CD14-positive monocyte (primary cell): ENCODE measurements at regions of chr17 and their contacts with region 1.

Region 1: DNA sequence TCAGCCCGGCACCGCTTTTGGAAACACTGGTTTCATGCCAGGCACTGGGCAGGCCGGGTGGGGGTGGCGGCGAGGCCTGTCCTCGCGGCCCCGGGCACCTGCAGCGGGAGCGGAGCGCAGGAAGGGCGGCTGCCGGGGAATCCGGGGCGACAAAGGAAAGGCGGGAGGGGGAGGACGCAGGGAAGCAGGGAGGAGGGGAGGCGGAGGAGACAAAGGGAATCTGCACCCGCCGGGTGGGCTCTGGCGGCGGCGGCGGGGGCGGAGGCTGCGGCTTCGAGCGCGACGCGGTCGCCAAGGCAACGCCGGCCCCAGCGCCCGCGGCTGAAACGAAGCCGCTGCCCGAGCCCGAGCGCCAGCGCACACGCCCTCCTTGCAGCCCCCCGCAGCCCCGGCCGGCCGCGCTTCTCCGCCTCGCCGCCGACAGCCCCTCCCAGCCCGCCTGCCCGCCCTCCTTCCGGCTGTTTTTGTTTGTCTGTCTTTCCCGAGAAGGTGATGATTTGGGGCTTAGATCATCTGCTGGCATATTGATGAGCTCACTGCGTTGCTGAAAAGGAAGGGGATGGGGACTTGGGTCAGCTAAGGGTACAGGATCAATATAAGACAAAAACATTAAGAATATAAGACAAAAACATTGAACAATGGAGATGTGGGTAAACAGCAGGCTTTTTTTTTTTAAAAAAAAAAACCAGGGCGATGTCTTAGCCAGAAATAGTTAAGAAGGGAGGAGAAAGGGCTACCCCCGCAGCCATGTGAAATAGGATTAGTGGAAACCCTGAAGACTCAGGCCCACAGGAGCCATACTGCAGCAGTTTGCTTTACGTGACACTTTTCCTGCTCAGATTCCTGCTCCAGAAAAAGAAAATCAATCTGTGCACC is 32.7 kb downstream of the CDK5R1 start:
- DNase-seq: no peak
- H3K4me3 ChIP-seq: peak overlapping the region; percentile 13 to 68 (median 32)
- H3K4me3 Mint-ChIP-seq: peak overlapping the region; percentile 61 to 93
- H3K27ac ChIP-seq: no peak overlapping the region
- H3K27ac Mint-ChIP-seq: no peak overlapping the region
- H3K4me1 ChIP-seq: peaks cover 15 to 19% of the 10 kb centered on the region in 2 donors
- H3K4me1 Mint-ChIP-seq: peaks cover 20% of the 10 kb centered on the region
- H3K27me3 ChIP-seq: peaks cover 30 to 41% of the 10 kb centered on the region in 2 donors
- H3K27me3 Mint-ChIP-seq: peaks cover 45 to 48% (median 48%) of the 10 kb centered on the region in 3 donors
- CTCF ChIP-seq: no peak

Region 2: DNA sequence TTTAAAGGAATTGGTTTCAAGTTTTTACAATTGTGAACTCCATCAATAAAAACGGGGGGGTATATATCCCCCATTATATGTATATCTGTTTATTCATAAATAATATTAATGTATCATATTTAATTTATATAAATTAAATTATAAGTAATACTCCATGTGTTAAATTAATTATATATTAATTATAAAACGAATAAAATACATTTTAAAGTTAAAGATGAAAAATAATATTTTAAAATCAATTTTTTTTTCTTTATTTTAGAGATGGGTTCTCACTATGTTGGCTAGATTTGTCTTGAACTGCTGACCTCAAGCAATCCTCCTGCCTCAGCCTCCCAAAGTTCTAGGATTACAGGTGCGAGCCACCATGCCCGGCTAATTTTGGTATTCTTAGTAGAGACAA is 92.6 kb before region 1 on chr17:
- intact Hi-C with region 1: no loop called
- DNase-seq: no peak
- H3K4me3 ChIP-seq: no peak overlapping the region
- H3K4me3 Mint-ChIP-seq: no peak overlapping the region
- H3K27ac ChIP-seq: no peak overlapping the region
- H3K27ac Mint-ChIP-seq: no peak overlapping the region
- H3K4me1 ChIP-seq: no peaks in the 10 kb centered on the region
- H3K4me1 Mint-ChIP-seq: no peaks in the 10 kb centered on the region
- H3K27me3 ChIP-seq: no peaks in the 10 kb centered on the region
- H3K27me3 Mint-ChIP-seq: peaks cover 1 to 3% (median 3%) of the 10 kb centered on the region in 3 donors
- CTCF ChIP-seq: no peak

Region 3: DNA sequence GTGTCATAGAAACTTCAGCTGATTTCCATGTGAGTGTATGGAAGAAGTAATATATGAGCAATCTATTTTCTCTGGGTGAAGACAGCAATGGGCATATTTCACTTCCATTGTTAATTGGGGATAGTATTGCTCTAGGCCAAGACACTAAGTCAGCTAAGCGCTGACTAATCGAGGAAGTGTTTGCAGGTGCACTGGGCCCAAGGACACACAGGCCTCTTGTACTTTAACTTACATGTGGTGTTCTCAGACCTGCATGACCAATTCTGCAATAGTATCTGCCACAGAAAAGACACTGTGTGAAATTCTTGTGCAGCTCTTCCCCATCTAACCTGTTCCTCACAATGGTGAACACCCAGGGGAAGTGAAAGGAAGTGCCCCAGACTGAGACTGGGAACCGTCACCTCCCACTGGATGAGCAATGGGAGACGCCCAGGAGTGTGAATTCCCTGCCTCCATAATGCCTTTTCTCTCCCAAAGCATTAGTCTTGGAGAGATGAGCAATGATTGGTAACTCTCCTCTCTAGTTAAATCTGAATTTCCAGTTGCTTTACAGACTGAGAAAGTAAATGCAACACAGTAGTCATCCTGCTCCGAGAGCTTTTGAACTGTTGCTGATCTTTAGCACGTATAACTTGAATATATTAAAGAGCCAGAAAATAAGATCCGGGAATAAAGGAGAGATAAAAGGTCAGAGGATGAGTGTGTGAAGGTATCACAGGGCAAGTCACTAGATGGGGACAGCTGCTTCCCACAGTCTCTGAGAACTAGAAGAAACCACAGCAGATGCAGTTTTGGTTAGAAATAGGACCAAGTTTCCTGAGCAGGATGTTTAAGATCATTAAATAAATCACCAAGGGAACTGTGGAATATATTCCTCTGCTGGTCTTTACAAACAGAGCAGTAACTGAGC is 50.0 kb after region 1 on chr17:
- intact Hi-C with region 1: loop called in 1 of 2 experiments (anchors 10 kb)
- DNase-seq: no peak
- H3K4me3 ChIP-seq: no peak overlapping the region
- H3K4me3 Mint-ChIP-seq: no peak overlapping the region
- H3K27ac ChIP-seq: no peak overlapping the region
- H3K27ac Mint-ChIP-seq: no peak overlapping the region
- H3K4me1 ChIP-seq: no peaks in the 10 kb centered on the region
- H3K4me1 Mint-ChIP-seq: no peaks in the 10 kb centered on the region
- H3K27me3 ChIP-seq: no peaks in the 10 kb centered on the region
- H3K27me3 Mint-ChIP-seq: peaks cover 2 to 5% (median 5%) of the 10 kb centered on the region in 3 donors
- CTCF ChIP-seq: no peak